Left ventricle myocardium inferior (tissue), 1 donor: ENCODE measurements at regions of chr2 and their contacts with region 1.

Region 1: DNA sequence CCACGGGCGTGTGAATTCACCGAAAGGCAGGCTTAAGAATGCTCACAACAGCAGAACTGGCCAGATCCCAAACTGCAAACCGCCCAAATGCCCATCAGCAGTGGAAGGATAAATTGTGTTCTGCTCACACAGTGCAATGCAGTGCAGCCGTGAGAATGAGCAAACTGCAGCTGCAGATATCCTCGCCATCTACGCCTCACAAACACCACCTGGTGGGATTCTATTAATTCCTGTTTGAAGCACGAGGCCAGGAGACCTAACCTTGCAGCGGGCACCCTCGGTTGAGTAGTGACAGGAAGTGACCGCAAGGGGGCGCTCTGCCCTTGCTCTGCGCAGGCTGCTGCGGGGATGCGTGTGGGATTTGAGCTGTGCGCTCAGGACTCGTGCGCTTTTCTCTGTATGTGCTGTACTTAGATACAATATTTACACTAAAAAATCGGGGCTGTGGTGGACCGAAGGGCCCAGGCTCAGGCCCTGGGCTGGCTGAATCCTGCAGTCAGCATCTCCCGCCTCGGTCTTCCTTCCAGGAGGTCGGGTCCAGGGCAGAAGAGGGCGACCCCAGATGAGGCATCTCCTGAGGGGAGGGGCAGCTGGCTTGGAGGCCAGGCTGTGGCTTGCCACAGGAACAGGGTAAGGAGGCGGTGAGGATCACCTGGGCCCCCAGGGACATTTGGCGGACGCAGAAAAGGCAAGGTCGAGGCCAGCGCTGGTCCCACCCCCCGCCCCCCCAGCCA is 19.8 kb upstream of the PDIA6 start:
- DNase-seq: peak; percentile 79
- H3K4me3 ChIP-seq: no peak overlapping the region
- H3K27ac ChIP-seq: no peak overlapping the region
- H3K4me1 ChIP-seq: peaks cover 7% of the 10 kb centered on the region
- H3K27me3 ChIP-seq: peaks cover 70% of the 10 kb centered on the region
- CTCF ChIP-seq: peak; percentile 98

Region 2: DNA sequence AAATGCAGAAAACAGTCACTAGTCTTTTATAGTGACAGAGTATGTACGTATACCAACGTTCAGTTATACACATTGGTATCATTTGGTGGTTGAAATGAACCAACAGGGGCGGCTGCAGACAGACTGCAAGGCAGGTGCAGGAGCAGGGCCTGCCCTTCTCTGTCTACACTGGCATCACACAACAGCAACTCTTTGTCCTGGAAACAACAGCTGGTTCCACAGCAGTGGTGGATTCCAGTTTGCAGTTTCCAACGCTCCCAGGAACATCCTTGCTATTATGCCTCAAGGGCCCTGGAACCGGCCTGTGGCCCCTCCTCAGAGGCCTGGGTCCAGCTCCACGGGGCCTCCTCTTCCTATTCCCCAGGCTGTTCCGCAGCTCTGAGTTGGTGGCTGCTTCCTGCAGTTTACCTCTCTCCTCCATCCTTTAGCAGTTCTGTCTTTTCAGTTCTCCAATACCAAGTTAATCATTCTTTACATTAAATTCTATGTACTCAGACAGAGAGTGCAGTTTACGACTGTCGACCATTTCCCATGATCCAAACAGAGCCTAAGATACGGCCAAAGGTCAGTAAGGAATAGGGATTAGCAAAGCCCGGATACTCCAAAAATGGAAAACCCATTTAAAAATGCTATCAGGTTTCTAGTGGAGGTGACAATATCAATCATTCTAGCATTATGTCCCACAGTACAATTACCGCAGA is 230.4 kb before region 1 on chr2:
- intact Hi-C with region 1: no loop called
- DNase-seq: no peak
- H3K4me3 ChIP-seq: no peak overlapping the region
- H3K27ac ChIP-seq: no peak overlapping the region
- H3K4me1 ChIP-seq: peaks cover 16% of the 10 kb centered on the region
- H3K27me3 ChIP-seq: no peaks in the 10 kb centered on the region
- CTCF ChIP-seq: no peak

Region 3: GRCh38 chr2:10688921-10689807 is 143.2 kb before region 1 on chr2:
- intact Hi-C with region 1: no loop called
- DNase-seq: peak; percentile 20
- H3K4me3 ChIP-seq: peak overlapping the region; percentile 91
- H3K27ac ChIP-seq: peak overlapping the region; percentile 93
- H3K4me1 ChIP-seq: peaks cover 53% of the 10 kb centered on the region
- H3K27me3 ChIP-seq: no peaks in the 10 kb centered on the region
- CTCF ChIP-seq: no peak

Region 4: DNA sequence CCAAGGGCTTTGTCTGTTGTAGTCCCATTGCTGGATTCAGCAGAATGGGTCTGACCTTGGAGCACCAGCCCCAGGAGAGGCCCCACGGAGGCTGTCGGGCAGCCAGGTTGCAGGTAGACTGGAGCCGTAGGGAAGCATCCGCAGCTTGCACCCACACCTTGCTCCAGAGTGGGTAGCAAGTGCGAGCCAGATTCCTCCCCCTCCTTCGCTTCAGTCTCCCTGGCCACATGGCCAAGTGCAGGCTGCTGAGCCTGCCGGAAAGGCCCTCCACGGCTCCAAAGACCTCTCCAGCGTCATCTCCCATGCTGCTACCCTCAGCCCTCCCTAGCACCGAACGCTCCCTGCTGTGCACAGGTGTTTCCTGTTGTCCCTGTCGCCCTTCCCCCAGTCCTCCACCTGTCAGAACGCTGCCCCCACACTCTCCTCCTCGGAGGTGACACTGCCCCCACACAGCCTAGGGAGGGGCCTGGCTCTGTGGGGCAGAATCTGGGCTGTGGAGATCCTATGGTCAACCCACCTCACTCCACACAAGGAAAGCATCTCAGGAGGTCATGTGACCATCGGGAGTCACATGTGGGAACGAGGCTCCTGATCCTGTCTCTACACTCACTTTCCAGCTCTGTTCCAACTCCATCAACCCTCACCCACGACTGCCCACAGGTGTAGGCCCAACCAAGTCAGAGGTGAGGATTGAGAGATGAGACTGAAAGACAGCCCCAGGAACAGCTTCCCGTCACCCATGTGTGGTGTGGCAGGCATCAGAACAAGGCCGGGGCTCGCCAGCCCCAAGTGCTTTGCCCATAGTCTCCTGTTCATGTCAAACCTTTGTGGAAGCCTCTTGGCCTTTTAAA is 87.6 kb after region 1 on chr2:
- intact Hi-C with region 1: loop called (anchors 10 kb)
- DNase-seq: no peak
- H3K4me3 ChIP-seq: no peak overlapping the region
- H3K27ac ChIP-seq: no peak overlapping the region
- H3K4me1 ChIP-seq: peaks cover 8% of the 10 kb centered on the region
- H3K27me3 ChIP-seq: peaks cover 34% of the 10 kb centered on the region
- CTCF ChIP-seq: no peak

Region 5: DNA sequence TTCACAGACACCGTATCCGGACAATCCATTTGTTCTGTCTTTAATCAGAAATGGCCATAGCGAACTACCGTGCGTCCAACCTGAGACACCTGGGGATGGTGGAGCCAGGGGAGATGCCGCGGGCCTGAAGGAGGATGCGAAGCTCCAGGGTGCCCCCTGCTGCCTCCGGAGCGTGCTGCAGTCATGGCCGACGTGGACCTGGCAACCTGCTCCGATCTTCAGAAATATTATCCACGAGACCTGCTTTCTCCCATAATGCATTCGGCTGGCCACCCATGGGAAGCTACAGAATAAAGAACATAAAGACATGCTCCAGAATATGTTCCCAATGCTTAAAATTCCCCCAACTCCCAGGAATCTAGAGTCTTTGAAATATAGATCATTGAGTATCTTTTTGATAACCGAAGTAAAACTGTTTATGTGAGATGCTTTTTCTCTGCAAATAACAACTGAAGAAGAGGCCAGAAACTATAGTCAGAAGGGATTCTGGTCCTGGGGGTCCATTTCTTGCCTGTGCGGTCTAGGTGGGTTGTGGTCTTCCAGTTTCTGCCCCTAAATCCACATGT is 292.2 kb after region 1 on chr2:
- intact Hi-C with region 1: loop called (anchors 5 kb)
- DNase-seq: peak; percentile 54
- H3K4me3 ChIP-seq: no peak overlapping the region
- H3K27ac ChIP-seq: no peak overlapping the region
- H3K4me1 ChIP-seq: peaks cover 12% of the 10 kb centered on the region
- H3K27me3 ChIP-seq: peaks cover 54% of the 10 kb centered on the region
- CTCF ChIP-seq: peak; percentile 78